CD4-positive, alpha-beta memory T cell (primary cell): ENCODE measurements at regions of chrX and their contacts with region 1.

Region 1: DNA sequence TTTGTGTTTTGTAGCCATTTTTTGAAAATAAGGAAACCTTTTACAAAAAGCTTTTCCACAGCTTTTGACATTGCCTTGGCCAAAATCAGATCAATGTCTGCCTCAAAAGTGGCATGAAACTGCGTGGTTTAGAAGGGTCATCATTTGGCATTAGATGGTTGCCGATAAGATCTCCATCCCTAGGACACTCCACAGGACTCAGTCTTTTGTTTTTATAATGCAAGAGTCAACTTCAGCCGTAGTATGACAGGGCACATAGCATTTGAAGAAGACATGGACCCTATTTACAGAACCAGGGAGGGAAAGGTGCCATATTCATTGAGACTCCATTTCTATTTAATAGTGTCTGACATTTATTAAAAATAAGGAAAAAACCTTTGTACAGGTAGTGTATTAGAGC is 1.3 kb downstream of the RTL8A start:
- DNase-seq: no peak
- H3K4me3 ChIP-seq: no peak overlapping the region
- H3K4me3 Mint-ChIP-seq: peak overlapping the region; percentile 84 to 92 (median 90)
- H3K27ac ChIP-seq: no peak overlapping the region
- H3K27ac Mint-ChIP-seq: peak overlapping the region; percentile 44 to 89 (median 83)
- H3K4me1 ChIP-seq: peaks cover 13% of the 10 kb centered on the region
- H3K4me1 Mint-ChIP-seq: peaks cover 14 to 27% (median 17%) of the 10 kb centered on the region in 4 donors
- H3K27me3 ChIP-seq: no peaks in the 10 kb centered on the region
- H3K27me3 Mint-ChIP-seq: no peaks in the 10 kb centered on the region

Region 2: DNA sequence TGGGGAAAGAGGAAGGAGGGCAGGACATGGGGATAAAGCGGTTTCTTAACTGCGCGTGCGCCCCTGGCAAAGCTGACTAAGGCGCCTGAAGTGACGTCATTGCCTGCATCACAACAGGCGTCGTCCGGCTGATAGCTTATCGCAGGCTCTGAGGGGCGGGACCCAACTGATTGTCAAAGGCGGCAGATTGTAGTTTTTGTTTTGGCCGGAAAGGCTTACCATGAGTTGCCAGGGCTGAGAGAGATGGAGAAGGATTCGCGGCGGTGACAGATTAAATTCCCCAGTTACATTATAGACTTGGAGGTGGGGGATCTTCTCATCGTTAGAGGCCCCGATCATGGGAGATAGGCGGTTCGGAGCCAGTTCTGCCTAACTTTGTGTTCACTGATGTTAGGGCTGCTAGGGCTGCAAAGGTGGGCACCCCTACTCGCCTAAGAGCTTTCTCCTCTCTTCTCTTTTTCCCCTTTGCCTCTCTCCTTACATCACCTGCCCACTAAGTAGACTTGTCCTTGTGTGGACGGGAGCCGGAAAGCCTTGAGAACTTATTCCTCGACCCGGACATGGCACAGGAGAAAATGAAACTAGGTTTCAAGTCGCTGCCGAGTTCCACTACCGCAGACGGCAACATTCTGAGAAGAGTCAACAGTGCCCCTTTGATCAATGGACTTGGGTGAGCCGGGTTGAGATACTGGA is 243.4 kb before region 1 on chrX:
- CTCF ChIA-PET with region 1: no interaction called
- POLR2A ChIA-PET with region 1: no interaction called
- intact Hi-C with region 1: loop called (anchors 1 kb)
- DNase-seq: peak; percentile 81 to 95 (median 89)
- H3K4me3 ChIP-seq: peak overlapping the region; percentile 66 to 84
- H3K4me3 Mint-ChIP-seq: peak overlapping the region; percentile 91 to 98 (median 96)
- H3K27ac ChIP-seq: peak overlapping the region; percentile 88
- H3K27ac Mint-ChIP-seq: peak overlapping the region; percentile 90 to 100 (median 99)
- H3K4me1 ChIP-seq: peaks cover 27% of the 10 kb centered on the region
- H3K4me1 Mint-ChIP-seq: peaks cover 16 to 39% (median 24%) of the 10 kb centered on the region in 4 donors
- H3K27me3 ChIP-seq: no peaks in the 10 kb centered on the region
- H3K27me3 Mint-ChIP-seq: no peaks in the 10 kb centered on the region

Region 3: GRCh38 chrX:135003876-135004623 is 46.6 kb before region 1 on chrX:
- CTCF ChIA-PET with region 1: no interaction called
- POLR2A ChIA-PET with region 1: interaction called, 9 read pairs
- intact Hi-C with region 1: loop called (anchors 1 kb)
- DNase-seq: peak; percentile 87 to 88 (median 88)
- H3K4me3 ChIP-seq: peak overlapping the region; percentile 23 to 62
- H3K4me3 Mint-ChIP-seq: peak overlapping the region; percentile 86 to 91 (median 88)
- H3K27ac ChIP-seq: no peak overlapping the region
- H3K27ac Mint-ChIP-seq: peak overlapping the region; percentile 65 to 95 (median 73)
- H3K4me1 ChIP-seq: peaks cover 7% of the 10 kb centered on the region
- H3K4me1 Mint-ChIP-seq: peaks cover 5 to 13% (median 10%) of the 10 kb centered on the region in 4 donors
- H3K27me3 ChIP-seq: no peaks in the 10 kb centered on the region
- H3K27me3 Mint-ChIP-seq: no peaks in the 10 kb centered on the region

Region 4: DNA sequence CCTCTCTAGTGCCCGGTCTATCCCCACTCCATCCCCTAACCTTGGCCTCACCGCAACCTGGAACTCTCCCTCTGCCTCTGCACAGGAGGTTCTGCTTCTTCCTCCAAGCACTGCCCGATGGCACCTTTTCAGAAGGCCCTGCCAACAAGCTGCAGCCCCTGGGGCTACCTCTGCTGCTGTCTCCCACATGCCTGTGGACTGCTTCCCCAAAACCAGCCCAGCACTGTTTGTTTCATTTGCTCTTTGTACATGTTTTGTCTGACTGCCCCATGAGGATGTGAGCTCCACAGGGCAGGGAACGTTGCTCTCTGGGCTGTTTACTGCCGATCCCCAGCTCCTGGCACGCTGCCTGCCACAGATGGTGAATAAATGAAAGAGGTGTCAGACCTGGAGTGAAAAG is 555.3 kb after region 1 on chrX:
- CTCF ChIA-PET with region 1: no interaction called
- POLR2A ChIA-PET with region 1: no interaction called
- intact Hi-C with region 1: no loop called
- DNase-seq: no peak
- H3K4me3 ChIP-seq: no peak overlapping the region
- H3K4me3 Mint-ChIP-seq: no peak overlapping the region
- H3K27ac ChIP-seq: no peak overlapping the region
- H3K27ac Mint-ChIP-seq: no peak overlapping the region
- H3K4me1 ChIP-seq: no peaks in the 10 kb centered on the region
- H3K4me1 Mint-ChIP-seq: no peaks in the 10 kb centered on the region
- H3K27me3 ChIP-seq: no peaks in the 10 kb centered on the region
- H3K27me3 Mint-ChIP-seq: peaks cover 7 to 18% of the 10 kb centered on the region in 2 donors